ENCODE measurements at regions of chr12 and their contacts with region 1.

Region 1: GRCh38 chr12:31896514-31897039 is 62.6 kb upstream of the RESF1 start:
- DNase-seq: peak; percentile 66 to 94 (median 91)
- H3K4me3 ChIP-seq: no peak overlapping the region
- H3K4me3 Mint-ChIP-seq: peak overlapping the region; percentile 64 to 80 (median 72)
- H3K27ac ChIP-seq: peak overlapping the region; percentile 40
- H3K27ac Mint-ChIP-seq: peak overlapping the region; percentile 91 to 100 (median 94)
- H3K4me1 ChIP-seq: peaks cover 72% of the 10 kb centered on the region
- H3K4me1 Mint-ChIP-seq: peaks cover 50 to 74% (median 63%) of the 10 kb centered on the region in 3 donors
- H3K27me3 ChIP-seq: no peaks in the 10 kb centered on the region
- H3K27me3 Mint-ChIP-seq: no peaks in the 10 kb centered on the region

Region 2: GRCh38 chr12:31728917-31729640 is 167.5 kb before region 1 on chr12 and contains the start of gene AMN1:
- CTCF ChIA-PET with region 1: interaction called, 7 read pairs
- POLR2A ChIA-PET with region 1: interaction called, 28 read pairs
- DNase-seq: peak; percentile 94 to 99 (median 98)
- H3K4me3 ChIP-seq: peak within 1 kb of the TSS; percentile 92
- H3K4me3 Mint-ChIP-seq: peak within 1 kb of the TSS; percentile 95 to 100 (median 98)
- H3K27ac ChIP-seq: peak within 1 kb of the TSS; percentile 98
- H3K27ac Mint-ChIP-seq: peak within 1 kb of the TSS; percentile 92 to 99 (median 98)
- H3K4me1 ChIP-seq: peaks cover 32% of the 10 kb centered on the region
- H3K4me1 Mint-ChIP-seq: peaks cover 63 to 80% (median 79%) of the 10 kb centered on the region in 3 donors
- H3K27me3 ChIP-seq: no peaks in the 10 kb centered on the region
- H3K27me3 Mint-ChIP-seq: no peaks in the 10 kb centered on the region
- total RNA-seq, gene AMN1: 2.6 to 3.8 TPM

Region 3: DNA sequence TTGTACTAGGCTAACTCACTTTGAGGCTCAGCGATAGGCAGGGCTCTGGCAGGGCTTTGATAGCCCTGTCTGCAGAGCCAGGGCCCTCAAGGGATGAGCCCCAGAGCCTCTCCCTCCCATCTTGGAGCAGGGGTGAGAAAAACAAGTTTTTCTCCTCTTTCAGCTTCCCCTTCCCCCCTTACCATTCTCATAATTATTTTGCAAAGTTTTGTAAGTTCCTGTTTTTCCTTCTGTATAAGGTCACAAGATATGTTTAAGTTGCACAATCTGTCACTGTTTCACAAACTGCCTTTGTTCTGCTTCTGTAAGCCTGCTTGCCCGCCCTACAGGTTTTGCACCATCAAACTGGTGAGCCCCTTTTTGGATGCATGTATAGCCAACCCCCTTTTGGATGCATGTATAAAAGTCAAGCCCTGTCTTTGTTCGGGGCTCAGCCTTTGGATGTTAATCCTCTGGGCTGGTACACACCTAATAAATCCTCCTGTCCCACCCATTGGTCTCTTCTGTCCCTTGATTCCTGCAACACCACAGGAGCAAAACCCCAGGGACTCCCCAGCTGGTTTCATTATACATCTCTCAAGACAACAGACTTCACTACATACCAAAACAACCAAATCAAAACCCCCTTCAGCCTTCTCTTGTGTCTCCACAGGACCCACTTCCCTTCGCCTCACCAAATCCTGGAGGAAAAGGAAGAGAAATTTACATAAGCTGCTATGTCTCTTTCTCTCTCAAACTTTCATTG is 10.2 kb after region 1 on chr12:
- CTCF ChIA-PET with region 1: interaction called, 6 read pairs
- POLR2A ChIA-PET with region 1: interaction called, 13 read pairs
- DNase-seq: no peak
- H3K4me3 ChIP-seq: no peak overlapping the region
- H3K4me3 Mint-ChIP-seq: no peak overlapping the region
- H3K27ac ChIP-seq: no peak overlapping the region
- H3K27ac Mint-ChIP-seq: peak overlapping the region in 1 of 8 donors; percentile 46
- H3K4me1 ChIP-seq: no peaks in the 10 kb centered on the region
- H3K4me1 Mint-ChIP-seq: peaks cover 0 to 14% (median 8%) of the 10 kb centered on the region in 3 donors
- H3K27me3 ChIP-seq: no peaks in the 10 kb centered on the region
- H3K27me3 Mint-ChIP-seq: no peaks in the 10 kb centered on the region

Region 4: GRCh38 chr12:31928246-31929026 is 31.9 kb after region 1 on chr12:
- CTCF ChIA-PET with region 1: interaction called, 9 read pairs
- POLR2A ChIA-PET with region 1: interaction called, 12 read pairs
- DNase-seq: peak in 3 of 5 donors; percentile 34 to 58 (median 56)
- H3K4me3 ChIP-seq: no peak overlapping the region
- H3K4me3 Mint-ChIP-seq: peak overlapping the region; percentile 72 to 94 (median 89)
- H3K27ac ChIP-seq: no peak overlapping the region
- H3K27ac Mint-ChIP-seq: peak overlapping the region; percentile 82 to 98 (median 97)
- H3K4me1 ChIP-seq: peaks cover 53% of the 10 kb centered on the region
- H3K4me1 Mint-ChIP-seq: peaks cover 57 to 62% (median 62%) of the 10 kb centered on the region in 3 donors
- H3K27me3 ChIP-seq: no peaks in the 10 kb centered on the region
- H3K27me3 Mint-ChIP-seq: no peaks in the 10 kb centered on the region

Measured in CD8-positive, alpha-beta memory T cell (primary cell).